ENCODE measurements at regions of chr6 and their contacts with region 1.

Region 1: DNA sequence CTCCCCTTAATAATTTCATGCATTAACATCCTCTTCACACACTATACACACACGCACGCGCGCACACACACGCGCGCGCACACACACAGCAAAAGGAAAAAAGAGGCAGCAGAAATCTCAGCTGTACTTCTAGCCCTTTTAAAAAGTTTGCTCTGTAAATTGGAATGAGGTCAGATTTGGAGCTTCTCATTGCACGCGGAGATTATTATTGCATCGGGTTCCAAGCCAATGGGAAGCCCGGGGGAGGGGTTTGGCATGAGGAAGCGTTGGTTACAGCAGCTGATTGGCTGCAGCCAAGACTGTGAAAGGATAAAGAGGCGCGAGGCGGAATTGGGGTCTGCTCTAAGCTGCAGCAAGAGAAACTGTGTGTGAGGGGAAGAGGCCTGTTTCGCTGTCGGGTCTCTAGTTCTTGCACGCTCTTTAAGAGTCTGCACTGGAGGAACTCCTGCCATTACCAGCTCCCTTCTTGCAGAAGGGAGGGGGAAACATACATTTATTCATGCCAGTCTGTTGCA is at the start of gene SOX4:
- DNase-seq: peak; percentile 90 to 91
- H3K4me3 ChIP-seq: peak within 1 kb of the TSS; percentile 98
- H3K27ac ChIP-seq: peak within 1 kb of the TSS; percentile 73
- H3K4me1 ChIP-seq: peaks cover 15% of the 10 kb centered on the region
- H3K27me3 ChIP-seq: no peaks in the 10 kb centered on the region
- CTCF ChIP-seq: no peak
- total RNA-seq, gene SOX4: 32.8 and 36.1 TPM in 2 replicates

Region 2: GRCh38 chr6:20092071-20092566 is 1501.3 kb before region 1 on chr6:
- CTCF ChIA-PET with region 1: no interaction called
- POLR2A ChIA-PET with region 1: no interaction called
- intact Hi-C with region 1: loop called (anchors 10 kb)
- DNase-seq: peak; percentile 17 to 49
- H3K4me3 ChIP-seq: no peak overlapping the region
- H3K27ac ChIP-seq: no peak overlapping the region
- H3K4me1 ChIP-seq: no peaks in the 10 kb centered on the region
- H3K27me3 ChIP-seq: no peaks in the 10 kb centered on the region
- CTCF ChIP-seq: peak; percentile 87

Region 3: GRCh38 chr6:20877008-20877937 is 716.2 kb before region 1 on chr6:
- CTCF ChIA-PET with region 1: interaction called, 7 read pairs
- POLR2A ChIA-PET with region 1: interaction called, 21 read pairs
- intact Hi-C with region 1: loop called (anchors 1 kb)
- DNase-seq: peak; percentile 89 to 99
- H3K4me3 ChIP-seq: 0 out of 2 replicates have a peak overlapping the region, but pooled peaks have one; percentile 0
- H3K27ac ChIP-seq: peak overlapping the region; percentile 90
- H3K4me1 ChIP-seq: peaks cover 42% of the 10 kb centered on the region
- H3K27me3 ChIP-seq: no peaks in the 10 kb centered on the region
- CTCF ChIP-seq: no peak

Region 4: GRCh38 chr6:21381335-21382217 is 211.9 kb before region 1 on chr6:
- CTCF ChIA-PET with region 1: no interaction called
- POLR2A ChIA-PET with region 1: no interaction called
- intact Hi-C with region 1: loop called (anchors 10 kb)
- DNase-seq: peak; percentile 59 to 91
- H3K4me3 ChIP-seq: no peak overlapping the region
- H3K27ac ChIP-seq: peak overlapping the region; percentile 93
- H3K4me1 ChIP-seq: peaks cover 59% of the 10 kb centered on the region
- H3K27me3 ChIP-seq: no peaks in the 10 kb centered on the region
- CTCF ChIP-seq: no peak

Region 5: GRCh38 chr6:21754891-21755290 is 161.4 kb after region 1 on chr6:
- CTCF ChIA-PET with region 1: interaction called, 4 read pairs
- POLR2A ChIA-PET with region 1: interaction called, 6 read pairs
- intact Hi-C with region 1: loop called (anchors 5 kb)
- DNase-seq: peak; percentile 66 to 91
- H3K4me3 ChIP-seq: peak overlapping the region; percentile 13; the same call in 1 of the 2 replicates
- H3K27ac ChIP-seq: peak overlapping the region; percentile 73
- H3K4me1 ChIP-seq: peaks cover 53% of the 10 kb centered on the region
- H3K27me3 ChIP-seq: no peaks in the 10 kb centered on the region
- CTCF ChIP-seq: no peak

Region 6: GRCh38 chr6:22043284-22043962 is 450.0 kb after region 1 on chr6:
- CTCF ChIA-PET with region 1: no interaction called
- POLR2A ChIA-PET with region 1: no interaction called
- intact Hi-C with region 1: loop called (anchors 5 kb)
- DNase-seq: peak in 1 of 2 experiments; percentile 32
- H3K4me3 ChIP-seq: no peak overlapping the region
- H3K27ac ChIP-seq: no peak overlapping the region
- H3K4me1 ChIP-seq: no peaks in the 10 kb centered on the region
- H3K27me3 ChIP-seq: no peaks in the 10 kb centered on the region
- CTCF ChIP-seq: no peak

Region 7: DNA sequence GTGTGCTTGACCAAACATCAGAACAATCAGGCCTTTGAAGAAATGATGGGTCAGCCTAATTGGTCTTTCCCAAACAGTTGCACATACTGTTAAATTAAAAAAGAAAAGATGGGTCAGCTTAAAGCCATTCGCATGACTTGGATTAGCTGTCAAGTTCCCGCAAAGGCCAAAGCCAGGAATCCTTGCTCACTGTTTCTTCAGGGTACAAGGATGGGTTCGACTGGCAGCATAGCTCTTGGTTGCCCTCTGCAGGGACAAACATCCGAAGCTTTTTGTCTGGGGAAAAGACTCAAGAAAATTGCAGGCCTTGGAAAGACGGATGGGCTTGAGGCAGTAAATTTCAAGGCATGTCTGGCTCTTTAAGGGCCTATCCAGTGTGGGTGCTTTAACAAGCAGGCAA is 1143.9 kb after region 1 on chr6:
- CTCF ChIA-PET with region 1: no interaction called
- POLR2A ChIA-PET with region 1: no interaction called
- intact Hi-C with region 1: loop called (anchors 10 kb)
- DNase-seq: peak in 1 of 2 experiments; percentile 3
- H3K4me3 ChIP-seq: no peak overlapping the region
- H3K27ac ChIP-seq: no peak overlapping the region
- H3K4me1 ChIP-seq: no peaks in the 10 kb centered on the region
- H3K27me3 ChIP-seq: no peaks in the 10 kb centered on the region
- CTCF ChIP-seq: peak; percentile 36; the same call in 1 of the 2 replicates